ENCODE measurements at regions of chr7 and their contacts with region 1.

Region 1: GRCh38 chr7:75994388-75995051 is at the start of gene TMEM120A:
- DNase-seq: peak; percentile 85 to 97 (median 95)
- ATAC-seq: peak; percentile 99
- H3K4me3 ChIP-seq: peak within 1 kb of the TSS; percentile 93 to 95
- H3K4me3 Mint-ChIP-seq: peak within 1 kb of the TSS; percentile 73
- H3K27ac ChIP-seq: peak within 1 kb of the TSS in 1 of 2 experiments; percentile 42
- H3K27ac Mint-ChIP-seq: no peak within 1 kb of the TSS
- H3K4me1 ChIP-seq: peaks cover 5% of the 10 kb centered on the region
- H3K4me1 Mint-ChIP-seq: peaks cover 35% of the 10 kb centered on the region
- H3K27me3 ChIP-seq: no peaks in the 10 kb centered on the region
- H3K27me3 Mint-ChIP-seq: no peaks in the 10 kb centered on the region
- CTCF ChIP-seq: no peak
- total RNA-seq, gene TMEM120A: 8.3 to 11.5 TPM

Region 2: GRCh38 chr7:75642810-75643486 is 351.6 kb before region 1 on chr7:
- CTCF ChIA-PET with region 1: no interaction called
- POLR2A ChIA-PET with region 1: no interaction called
- intact Hi-C with region 1: loop called in 1 of 2 experiments (anchors 5 kb)
- DNase-seq: peak; percentile 33 to 85 (median 69)
- ATAC-seq: peak; percentile 98
- H3K4me3 ChIP-seq: no peak overlapping the region
- H3K4me3 Mint-ChIP-seq: no peak overlapping the region
- H3K27ac ChIP-seq: no peak overlapping the region
- H3K27ac Mint-ChIP-seq: no peak overlapping the region
- H3K4me1 ChIP-seq: peaks cover 7% of the 10 kb centered on the region
- H3K4me1 Mint-ChIP-seq: peaks cover 11% of the 10 kb centered on the region
- H3K27me3 ChIP-seq: no peaks in the 10 kb centered on the region
- H3K27me3 Mint-ChIP-seq: no peaks in the 10 kb centered on the region
- CTCF ChIP-seq: peak; percentile 89

Region 3: GRCh38 chr7:75738987-75739795 is 255.3 kb before region 1 on chr7:
- CTCF ChIA-PET with region 1: no interaction called
- POLR2A ChIA-PET with region 1: no interaction called
- intact Hi-C with region 1: loop called (anchors 1 to 2 kb)
- DNase-seq: peak; percentile 99 to 100 (median 99)
- ATAC-seq: peak; percentile 92
- H3K4me3 ChIP-seq: peak overlapping the region; percentile 85 to 92
- H3K4me3 Mint-ChIP-seq: peak overlapping the region; percentile 99
- H3K27ac ChIP-seq: peak overlapping the region; percentile 71
- H3K27ac Mint-ChIP-seq: peak overlapping the region; percentile 98
- H3K4me1 ChIP-seq: peaks cover 13% of the 10 kb centered on the region
- H3K4me1 Mint-ChIP-seq: peaks cover 15% of the 10 kb centered on the region
- H3K27me3 ChIP-seq: peaks cover 0 to 4% of the 10 kb centered on the region in 2 experiments
- H3K27me3 Mint-ChIP-seq: no peaks in the 10 kb centered on the region
- CTCF ChIP-seq: no peak

Region 4: DNA sequence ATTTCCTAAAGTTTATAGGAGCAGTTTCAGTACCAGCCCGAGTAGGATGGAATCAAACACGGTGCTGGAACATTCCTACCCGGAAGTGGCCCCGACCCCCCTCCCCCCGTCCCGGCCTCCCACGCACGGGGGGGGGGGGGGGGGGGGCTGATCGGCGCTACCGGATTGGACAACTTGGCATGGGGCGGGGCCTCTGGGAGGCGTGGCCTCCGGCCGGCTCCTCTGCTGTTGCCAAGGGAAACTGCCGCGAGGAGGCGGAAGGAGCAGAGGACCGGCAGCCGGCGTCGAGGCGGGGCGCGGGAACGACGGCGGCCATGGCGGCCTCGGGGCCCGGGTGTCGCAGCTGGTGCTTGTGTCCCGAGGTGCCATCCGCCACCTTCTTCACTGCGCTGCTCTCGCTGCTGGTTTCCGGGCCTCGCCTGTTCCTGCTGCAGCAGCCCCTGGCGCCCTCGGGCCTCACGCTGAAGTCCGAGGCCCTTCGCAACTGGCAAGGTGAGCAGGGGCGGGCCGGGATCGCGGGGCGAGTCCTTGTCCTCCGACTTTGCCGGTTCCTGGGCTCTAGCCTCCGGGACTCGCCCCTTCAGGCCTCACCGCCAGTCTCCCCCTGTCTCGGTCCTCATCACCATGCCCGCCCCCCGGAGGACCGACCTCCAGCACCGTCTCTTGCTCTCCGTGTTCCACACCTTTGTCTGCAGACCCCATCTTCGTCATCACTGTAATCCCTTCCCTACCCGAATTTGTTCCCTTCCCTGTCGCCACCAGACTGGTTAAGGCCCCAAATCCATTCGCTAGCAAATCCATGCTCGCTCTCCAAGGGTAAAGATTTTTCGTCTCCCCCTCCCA is 115.5 kb before region 1 on chr7 and contains the start of gene RHBDD2:
- CTCF ChIA-PET with region 1: no interaction called
- POLR2A ChIA-PET with region 1: no interaction called
- intact Hi-C with region 1: loop called (anchors 1 kb)
- DNase-seq: peak; percentile 95 to 98 (median 97)
- ATAC-seq: peak; percentile 93
- H3K4me3 ChIP-seq: peak within 1 kb of the TSS; percentile 69 to 100
- H3K4me3 Mint-ChIP-seq: peak within 1 kb of the TSS; percentile 93
- H3K27ac ChIP-seq: peak within 1 kb of the TSS; percentile 73 to 88
- H3K27ac Mint-ChIP-seq: peak within 1 kb of the TSS; percentile 89
- H3K4me1 ChIP-seq: peaks cover 18% of the 10 kb centered on the region
- H3K4me1 Mint-ChIP-seq: peaks cover 34% of the 10 kb centered on the region
- H3K27me3 ChIP-seq: no peaks in the 10 kb centered on the region
- H3K27me3 Mint-ChIP-seq: no peaks in the 10 kb centered on the region
- CTCF ChIP-seq: no peak
- total RNA-seq, gene RHBDD2: 167 to 173 TPM

Region 5: GRCh38 chr7:75914730-75915585 is 79.6 kb before region 1 on chr7 and contains the start of gene POR:
- CTCF ChIA-PET with region 1: no interaction called
- POLR2A ChIA-PET with region 1: interaction called, 20 read pairs
- intact Hi-C with region 1: loop called (anchors 1 kb)
- DNase-seq: peak; percentile 94 to 99 (median 98)
- ATAC-seq: peak; percentile 94
- H3K4me3 ChIP-seq: peak within 1 kb of the TSS; percentile 98 to 99
- H3K4me3 Mint-ChIP-seq: peak within 1 kb of the TSS; percentile 92
- H3K27ac ChIP-seq: peak within 1 kb of the TSS; percentile 92 to 97
- H3K27ac Mint-ChIP-seq: peak within 1 kb of the TSS; percentile 96
- H3K4me1 ChIP-seq: peaks cover 24% of the 10 kb centered on the region
- H3K4me1 Mint-ChIP-seq: peaks cover 37% of the 10 kb centered on the region
- H3K27me3 ChIP-seq: no peaks in the 10 kb centered on the region
- H3K27me3 Mint-ChIP-seq: no peaks in the 10 kb centered on the region
- CTCF ChIP-seq: no peak
- total RNA-seq, gene POR: 64.4 to 66.7 TPM

Region 6: DNA sequence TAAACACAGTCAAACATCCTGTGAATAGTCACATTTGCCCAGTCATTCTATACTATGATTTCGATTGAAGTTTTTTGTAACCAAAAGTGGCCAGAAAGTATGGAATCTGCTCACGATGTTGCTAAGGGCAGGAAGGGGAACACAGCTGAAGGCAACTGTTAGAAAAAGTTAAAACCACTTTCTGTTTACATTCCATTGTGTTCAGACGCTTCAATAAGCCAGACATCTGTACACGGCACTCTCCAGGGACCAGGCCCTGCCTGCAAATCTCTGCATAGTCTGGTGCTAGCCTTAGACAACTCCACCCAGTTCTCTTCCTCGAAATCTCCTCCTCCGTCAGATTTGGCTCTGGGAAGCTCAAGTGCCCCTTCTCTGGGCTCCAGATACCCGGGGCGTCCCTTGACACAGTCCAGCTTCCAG is 16.9 kb after region 1 on chr7:
- CTCF ChIA-PET with region 1: no interaction called
- POLR2A ChIA-PET with region 1: no interaction called
- intact Hi-C with region 1: loop called in 1 of 2 experiments (anchors 1 kb)
- DNase-seq: no peak
- ATAC-seq: no peak
- H3K4me3 ChIP-seq: no peak overlapping the region
- H3K4me3 Mint-ChIP-seq: no peak overlapping the region
- H3K27ac ChIP-seq: no peak overlapping the region
- H3K27ac Mint-ChIP-seq: no peak overlapping the region
- H3K4me1 ChIP-seq: peaks cover 26% of the 10 kb centered on the region
- H3K4me1 Mint-ChIP-seq: peaks cover 25% of the 10 kb centered on the region
- H3K27me3 ChIP-seq: no peaks in the 10 kb centered on the region
- H3K27me3 Mint-ChIP-seq: no peaks in the 10 kb centered on the region
- CTCF ChIP-seq: no peak

Region 7: GRCh38 chr7:76020031-76020714 is 25.7 kb after region 1 on chr7:
- CTCF ChIA-PET with region 1: interaction called, 10 read pairs
- POLR2A ChIA-PET with region 1: no interaction called
- intact Hi-C with region 1: no loop called
- DNase-seq: peak; percentile 39 to 82 (median 72)
- ATAC-seq: peak; percentile 68
- H3K4me3 ChIP-seq: no peak overlapping the region
- H3K4me3 Mint-ChIP-seq: no peak overlapping the region
- H3K27ac ChIP-seq: no peak overlapping the region
- H3K27ac Mint-ChIP-seq: no peak overlapping the region
- H3K4me1 ChIP-seq: peaks cover 8% of the 10 kb centered on the region
- H3K4me1 Mint-ChIP-seq: peaks cover 10% of the 10 kb centered on the region
- H3K27me3 ChIP-seq: no peaks in the 10 kb centered on the region
- H3K27me3 Mint-ChIP-seq: no peaks in the 10 kb centered on the region
- CTCF ChIP-seq: peak; percentile 85

Measured in CD8-positive, alpha-beta T cell (primary cell).